ENCODE measurements at regions of chr10 and their contacts with region 1.

Region 1: GRCh38 chr10:61010863-61011262 is 66.9 kb upstream of the RHOBTB1 start:
- DNase-seq: no peak
- ATAC-seq: no peak
- H3K4me3 Mint-ChIP-seq: no peak overlapping the region
- H3K27ac Mint-ChIP-seq: no peak overlapping the region
- H3K4me1 Mint-ChIP-seq: no peaks in the 10 kb centered on the region
- H3K27me3 Mint-ChIP-seq: no peaks in the 10 kb centered on the region; the same call in 1 of the 2 replicates
- CTCF ChIP-seq: no peak

Region 2: DNA sequence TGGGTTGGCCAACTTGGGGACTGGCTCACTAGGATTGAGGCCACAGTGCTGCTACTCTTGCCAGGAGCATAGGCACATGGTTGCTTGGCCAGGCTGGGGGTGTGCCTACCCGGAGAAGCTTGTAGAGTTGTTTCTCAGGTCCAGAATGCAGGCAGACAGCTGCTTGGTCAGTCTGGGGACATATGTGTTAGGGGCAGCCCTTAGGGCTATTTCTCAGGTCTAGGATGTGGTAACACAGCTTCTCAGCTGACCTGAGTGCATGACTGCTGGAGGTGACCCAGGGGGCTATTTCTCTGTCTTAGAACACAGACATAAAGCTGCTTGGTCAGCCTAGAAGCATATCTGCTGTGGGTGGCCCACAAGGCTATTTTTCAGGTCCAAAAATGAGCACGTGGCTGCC is 1364.7 kb before region 1 on chr10:
- CTCF ChIA-PET with region 1: no interaction called
- POLR2A ChIA-PET with region 1: interaction called, 10 read pairs
- DNase-seq: no peak
- ATAC-seq: no peak
- H3K4me3 Mint-ChIP-seq: no peak overlapping the region
- H3K27ac Mint-ChIP-seq: no peak overlapping the region
- H3K4me1 Mint-ChIP-seq: peaks cover 12% of the 10 kb centered on the region
- H3K27me3 Mint-ChIP-seq: no peaks in the 10 kb centered on the region
- CTCF ChIP-seq: no peak

Region 3: GRCh38 chr10:60572511-60573194 is 438.2 kb before region 1 on chr10:
- CTCF ChIA-PET with region 1: no interaction called
- POLR2A ChIA-PET with region 1: no interaction called
- DNase-seq: peak; percentile 38
- ATAC-seq: peak; percentile 85
- H3K4me3 Mint-ChIP-seq: peak overlapping the region; percentile 49
- H3K27ac Mint-ChIP-seq: peak overlapping the region; percentile 86
- H3K4me1 Mint-ChIP-seq: peaks cover 49% of the 10 kb centered on the region
- H3K27me3 Mint-ChIP-seq: no peaks in the 10 kb centered on the region
- CTCF ChIP-seq: no peak

Region 4: DNA sequence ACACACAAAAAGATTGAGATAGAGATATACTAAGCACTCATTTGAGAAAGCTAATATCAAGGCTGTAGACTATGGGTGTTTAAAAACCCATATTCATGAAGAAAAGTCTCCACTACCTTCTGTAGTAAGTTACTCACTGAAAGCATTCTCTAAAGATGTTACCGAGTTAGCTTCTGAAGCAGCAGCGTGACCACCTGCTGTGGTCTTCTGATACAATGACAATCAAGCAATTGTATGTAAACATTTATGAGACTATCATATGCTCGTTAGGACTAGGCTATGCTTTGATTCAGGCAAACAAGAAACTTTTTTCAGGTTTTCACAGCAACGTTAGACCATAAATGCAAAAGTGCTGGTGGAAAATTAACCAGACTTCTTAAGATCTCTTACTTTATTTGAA is 78.1 kb before region 1 on chr10:
- CTCF ChIA-PET with region 1: no interaction called
- POLR2A ChIA-PET with region 1: no interaction called
- DNase-seq: no peak
- ATAC-seq: no peak
- H3K4me3 Mint-ChIP-seq: no peak overlapping the region
- H3K27ac Mint-ChIP-seq: no peak overlapping the region
- H3K4me1 Mint-ChIP-seq: 0 out of 2 replicates have a peak, but pooled peaks cover 3% of the 10 kb centered on the region
- H3K27me3 Mint-ChIP-seq: no peaks in the 10 kb centered on the region
- CTCF ChIP-seq: no peak

Region 5: DNA sequence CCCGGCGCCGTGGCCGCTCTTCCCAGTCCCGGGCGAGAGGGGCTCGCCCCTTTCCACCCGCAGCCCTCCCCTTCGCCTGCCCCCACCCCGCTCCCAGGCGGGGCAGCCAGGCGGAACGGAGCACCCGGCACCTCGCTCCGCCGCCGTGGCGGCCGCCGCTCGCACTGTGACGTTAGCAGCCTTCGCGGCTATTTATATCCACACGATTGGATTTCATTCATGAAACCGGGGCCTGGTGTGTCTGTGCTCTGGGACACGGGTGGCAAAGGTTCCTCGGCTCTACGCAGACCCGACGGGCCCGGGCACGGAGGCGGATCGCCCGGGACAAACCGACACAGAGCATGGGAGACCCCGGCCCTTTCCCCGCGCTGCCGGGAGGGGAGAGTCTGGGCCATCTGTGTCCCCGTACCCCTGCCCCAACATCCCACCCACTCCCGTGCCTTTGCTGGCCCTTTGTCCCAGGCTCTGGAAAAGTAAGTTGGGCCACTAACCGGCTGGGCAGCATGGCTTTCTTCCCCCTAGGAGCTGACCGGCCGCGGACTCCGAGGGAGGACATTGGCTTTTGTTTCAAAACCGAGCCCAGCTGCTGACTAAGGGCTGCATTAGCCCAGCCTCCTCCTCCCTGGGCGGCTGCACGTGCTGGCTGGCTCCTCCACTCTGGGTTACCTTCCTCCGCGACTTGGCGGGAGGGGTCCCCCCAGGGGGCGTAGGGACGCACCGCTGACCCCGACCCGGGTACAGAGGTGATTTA is 66.5 kb before region 1 on chr10 and contains the start of gene RHOBTB1:
- CTCF ChIA-PET with region 1: no interaction called
- POLR2A ChIA-PET with region 1: no interaction called
- DNase-seq: peak; percentile 64
- ATAC-seq: peak; percentile 67
- H3K4me3 Mint-ChIP-seq: peak within 1 kb of the TSS; percentile 81
- H3K27ac Mint-ChIP-seq: no peak within 1 kb of the TSS
- H3K4me1 Mint-ChIP-seq: peaks cover 13% of the 10 kb centered on the region
- H3K27me3 Mint-ChIP-seq: peaks cover 19% of the 10 kb centered on the region
- CTCF ChIP-seq: no peak
- total RNA-seq, gene RHOBTB1: 6.9 to 8.3 TPM (median 7.3 TPM) in 3 replicates

Region 6: DNA sequence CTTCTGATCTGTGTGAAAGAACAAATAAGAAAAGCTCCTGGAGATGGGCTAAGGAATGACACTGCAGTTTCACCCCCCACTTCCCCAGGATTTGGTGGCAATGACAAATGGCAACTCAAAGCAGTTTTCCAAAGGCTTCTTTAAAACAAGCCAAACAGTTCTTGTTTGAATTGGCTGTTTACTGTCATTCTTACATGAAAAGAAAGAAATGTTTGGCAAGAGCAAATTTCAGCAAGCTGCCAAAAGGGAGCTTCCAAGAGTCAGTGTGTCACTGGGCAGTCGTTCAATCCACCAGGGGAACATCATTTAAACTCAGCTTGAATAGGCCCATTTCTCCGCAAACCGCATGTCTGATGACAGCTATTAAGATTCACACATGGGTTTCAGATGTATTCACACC is 52.2 kb after region 1 on chr10:
- CTCF ChIA-PET with region 1: no interaction called
- POLR2A ChIA-PET with region 1: no interaction called
- DNase-seq: no peak
- ATAC-seq: no peak
- H3K4me3 Mint-ChIP-seq: no peak overlapping the region
- H3K27ac Mint-ChIP-seq: no peak overlapping the region
- H3K4me1 Mint-ChIP-seq: 0 out of 2 replicates have a peak, but pooled peaks cover 5% of the 10 kb centered on the region
- H3K27me3 Mint-ChIP-seq: no peaks in the 10 kb centered on the region
- CTCF ChIP-seq: no peak